T-cell (primary cell): ENCODE measurements at regions of chr1 and their contacts with region 1.

Region 1: DNA sequence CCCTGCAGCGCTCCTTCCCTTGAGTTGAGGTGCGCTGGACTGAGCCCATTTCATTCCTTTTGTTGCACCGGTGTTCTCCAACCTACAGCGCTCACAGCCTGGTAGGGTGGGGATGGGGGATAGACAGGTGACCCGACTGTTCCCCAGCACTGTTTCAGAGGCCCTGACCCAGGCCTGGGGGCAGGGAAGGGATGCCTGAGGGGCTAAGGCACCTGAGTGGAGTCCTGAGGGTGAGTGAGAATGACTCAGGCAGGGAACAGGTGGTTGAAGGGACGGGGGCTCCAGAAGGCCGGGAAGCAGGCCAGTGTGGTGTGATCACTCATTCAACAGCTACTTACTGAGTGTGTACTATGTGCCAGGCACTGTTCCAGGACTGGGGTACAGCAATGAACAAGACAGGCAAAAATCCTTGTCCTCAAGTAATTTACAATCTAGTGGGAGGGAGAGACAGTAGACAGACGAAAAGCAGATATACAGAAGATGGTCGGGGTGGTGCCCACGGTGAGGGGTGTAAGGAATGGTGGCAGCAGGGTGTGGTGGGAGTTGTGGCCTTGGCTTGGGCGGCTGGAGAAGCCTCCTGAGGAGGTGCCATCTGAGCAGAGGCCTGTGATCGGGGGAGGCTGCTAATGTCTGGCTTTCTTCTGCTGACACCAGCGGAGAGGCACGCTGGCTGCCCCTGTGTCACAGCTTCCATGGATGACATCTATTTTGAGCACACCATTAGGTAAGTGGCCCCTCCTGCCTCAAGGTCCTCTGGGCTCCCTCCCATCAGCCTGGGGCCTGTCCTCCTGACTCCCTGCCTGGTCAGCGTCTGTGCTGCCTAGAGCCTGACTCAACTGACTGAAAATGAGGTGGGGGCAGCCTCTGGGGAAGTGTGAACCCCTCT is 37.4 kb downstream of the ACOT11 start:
- DNase-seq: no peak
- ATAC-seq: no peak
- H3K4me3 ChIP-seq: no peak overlapping the region
- H3K4me3 Mint-ChIP-seq: no peak overlapping the region
- H3K27ac ChIP-seq: no peak overlapping the region
- H3K27ac Mint-ChIP-seq: no peak overlapping the region
- H3K4me1 ChIP-seq: peaks cover 0 to 3% of the 10 kb centered on the region in 2 experiments
- H3K4me1 Mint-ChIP-seq: peaks cover 5 to 7% (median 6%) of the 10 kb centered on the region in 3 donors
- H3K27me3 ChIP-seq: peaks cover 0 to 2% of the 10 kb centered on the region in 2 experiments
- H3K27me3 Mint-ChIP-seq: no peaks in the 10 kb centered on the region

Region 2: DNA sequence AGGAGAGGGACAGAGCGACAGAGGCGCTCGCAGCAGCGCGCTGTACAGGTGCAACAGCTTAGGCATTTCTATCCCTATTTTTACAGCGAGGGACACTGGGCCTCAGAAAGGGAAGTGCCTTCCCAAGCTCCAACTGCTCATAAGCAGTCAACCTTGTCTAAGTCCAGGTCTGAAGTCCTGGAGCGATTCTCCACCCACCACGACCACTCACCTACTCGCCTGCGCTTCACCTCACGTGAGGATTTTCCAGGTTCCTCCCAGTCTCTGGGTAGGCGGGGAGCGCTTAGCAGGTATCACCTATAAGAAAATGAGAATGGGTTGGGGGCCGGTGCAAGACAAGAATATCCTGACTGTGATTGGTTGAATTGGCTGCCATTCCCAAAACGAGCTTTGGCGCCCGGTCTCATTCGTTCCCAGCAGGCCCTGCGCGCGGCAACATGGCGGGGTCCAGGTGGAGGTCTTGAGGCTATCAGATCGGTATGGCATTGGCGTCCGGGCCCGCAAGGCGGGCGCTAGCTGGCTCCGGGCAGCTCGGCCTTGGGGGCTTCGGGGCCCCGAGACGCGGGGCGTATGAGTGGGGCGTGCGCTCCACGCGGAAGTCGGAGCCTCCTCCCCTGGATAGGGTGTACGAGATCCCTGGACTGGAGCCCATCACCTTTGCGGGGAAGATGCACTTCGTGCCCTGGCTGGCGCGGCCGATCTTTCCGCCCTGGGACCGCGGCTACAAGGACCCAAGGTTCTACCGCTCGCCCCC is 385.5 kb before region 1 on chr1 and contains the starts of genes CYB5RL and MRPL37:
- CTCF ChIA-PET with region 1: no interaction called
- POLR2A ChIA-PET with region 1: interaction called in 1 of 2 experiments, 13 read pairs
- DNase-seq: peak; percentile 73 to 96 (median 88)
- ATAC-seq: peak; percentile 98 to 99 (median 99)
- H3K4me3 ChIP-seq: peak within 1 kb of the TSS; percentile 79 to 97
- H3K4me3 Mint-ChIP-seq: peak within 1 kb of the TSS; percentile 88 to 92 (median 90)
- H3K27ac ChIP-seq: peak within 1 kb of the TSS; percentile 8
- H3K27ac Mint-ChIP-seq: peak within 1 kb of the TSS; percentile 72 to 91
- H3K4me1 ChIP-seq: peaks cover 9 to 21% of the 10 kb centered on the region in 2 experiments
- H3K4me1 Mint-ChIP-seq: peaks cover 30 to 41% (median 37%) of the 10 kb centered on the region in 3 donors
- H3K27me3 ChIP-seq: no peaks in the 10 kb centered on the region
- H3K27me3 Mint-ChIP-seq: no peaks in the 10 kb centered on the region
- total RNA-seq, gene CYB5RL: 5.7 to 11.5 (median 10.0) TPM
- total RNA-seq, gene MRPL37: 27.4 to 45.7 (median 40.6) TPM